ENCODE measurements at regions of chr6 and their contacts with region 1.

Region 1: GRCh38 chr6:25601800-25602673 is 50.0 kb upstream of the SCGN start:
- DNase-seq: no peak
- H3K4me3 ChIP-seq: no peak overlapping the region
- H3K27ac ChIP-seq: no peak overlapping the region
- H3K4me1 ChIP-seq: peaks cover 0 to 8% of the 10 kb centered on the region in 2 donors
- H3K27me3 ChIP-seq: no peaks in the 10 kb centered on the region
- CTCF ChIP-seq: peak in 5 of 6 experiments; percentile 7 to 77 (median 53)
- POLR2A ChIP-seq: no peak

Region 2: GRCh38 chr6:25263657-25264056 is 338.4 kb before region 1 on chr6:
- intact Hi-C with region 1: loop called (anchors 5 kb)
- DNase-seq: no peak
- H3K4me3 ChIP-seq: no peak overlapping the region
- H3K27ac ChIP-seq: no peak overlapping the region
- H3K4me1 ChIP-seq: no peaks in the 10 kb centered on the region
- H3K27me3 ChIP-seq: no peaks in the 10 kb centered on the region
- CTCF ChIP-seq: no peak
- POLR2A ChIP-seq: no peak

Region 3: DNA sequence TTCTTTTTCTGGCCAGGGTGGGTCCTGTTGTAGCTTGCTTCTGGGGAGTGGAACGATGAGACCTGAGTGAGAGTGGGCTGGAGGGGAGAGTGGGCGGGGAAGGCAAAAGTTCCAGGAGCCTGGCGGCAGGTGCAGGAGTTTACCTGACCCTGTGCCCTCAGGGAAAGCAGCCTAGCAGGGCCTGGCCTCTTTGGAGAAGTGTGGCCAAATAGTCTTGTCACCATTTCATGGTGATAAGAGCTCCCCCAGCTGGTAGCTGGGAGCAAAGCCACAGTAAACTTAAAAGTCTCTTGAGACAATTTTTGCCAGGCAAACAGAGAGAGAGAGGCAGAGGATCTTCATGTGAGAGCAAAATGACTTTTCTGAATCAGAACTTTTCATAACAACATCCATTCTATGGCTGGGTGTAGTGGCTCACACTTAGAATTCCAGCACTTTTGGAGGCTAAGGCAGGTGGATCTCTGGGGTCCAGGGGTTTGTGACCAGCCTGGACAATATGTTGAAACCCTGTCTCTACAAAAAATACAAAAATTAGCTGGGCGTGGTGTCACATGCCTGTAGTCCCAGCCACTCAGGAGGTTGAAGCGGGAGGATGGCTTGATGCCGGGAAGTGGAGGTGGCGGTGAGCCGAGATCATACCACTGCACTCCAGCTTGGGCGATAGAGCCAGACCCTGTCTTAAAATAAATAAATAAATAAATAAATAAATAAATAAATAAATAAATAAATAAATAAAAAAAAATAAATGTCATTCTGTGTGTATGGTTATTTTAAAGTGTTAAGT is 111.8 kb before region 1 on chr6:
- intact Hi-C with region 1: loop called (anchors 10 kb)
- DNase-seq: peak; percentile 77 to 81
- H3K4me3 ChIP-seq: no peak overlapping the region
- H3K27ac ChIP-seq: peak overlapping the region in 2 of 3 donors; percentile 11 to 48
- H3K4me1 ChIP-seq: peaks cover 3 to 9% of the 10 kb centered on the region in 2 donors
- H3K27me3 ChIP-seq: no peaks in the 10 kb centered on the region
- CTCF ChIP-seq: peak; percentile 46 to 90 (median 84)
- POLR2A ChIP-seq: no peak

Region 4: GRCh38 chr6:25788305-25788922 is 186.4 kb after region 1 on chr6:
- intact Hi-C with region 1: no loop called
- DNase-seq: peak; percentile 47 to 57
- H3K4me3 ChIP-seq: no peak overlapping the region
- H3K27ac ChIP-seq: no peak overlapping the region
- H3K4me1 ChIP-seq: no peaks in the 10 kb centered on the region
- H3K27me3 ChIP-seq: no peaks in the 10 kb centered on the region
- CTCF ChIP-seq: peak in 5 of 6 experiments; percentile 11 to 59 (median 45)
- POLR2A ChIP-seq: no peak

Region 5: GRCh38 chr6:26659042-26659999 is 1057.3 kb after region 1 on chr6 and contains the start of gene ZNF322:
- intact Hi-C with region 1: no loop called
- DNase-seq: peak; percentile 95
- H3K4me3 ChIP-seq: peak within 1 kb of the TSS; percentile 11 to 79 (median 44)
- H3K27ac ChIP-seq: peak within 1 kb of the TSS; percentile 64 to 83 (median 81)
- H3K4me1 ChIP-seq: peaks cover 14 to 15% of the 10 kb centered on the region in 2 donors
- H3K27me3 ChIP-seq: no peaks in the 10 kb centered on the region
- CTCF ChIP-seq: no peak
- POLR2A ChIP-seq: peak in 1 of 2 donors; percentile 82
- total RNA-seq, gene ZNF322: 19.3 to 40.4 (median 22.1) TPM

Measured in thyroid gland (tissue), 4 donors.